ENCODE measurements at regions of chr7 and their contacts with region 1.

Region 1: DNA sequence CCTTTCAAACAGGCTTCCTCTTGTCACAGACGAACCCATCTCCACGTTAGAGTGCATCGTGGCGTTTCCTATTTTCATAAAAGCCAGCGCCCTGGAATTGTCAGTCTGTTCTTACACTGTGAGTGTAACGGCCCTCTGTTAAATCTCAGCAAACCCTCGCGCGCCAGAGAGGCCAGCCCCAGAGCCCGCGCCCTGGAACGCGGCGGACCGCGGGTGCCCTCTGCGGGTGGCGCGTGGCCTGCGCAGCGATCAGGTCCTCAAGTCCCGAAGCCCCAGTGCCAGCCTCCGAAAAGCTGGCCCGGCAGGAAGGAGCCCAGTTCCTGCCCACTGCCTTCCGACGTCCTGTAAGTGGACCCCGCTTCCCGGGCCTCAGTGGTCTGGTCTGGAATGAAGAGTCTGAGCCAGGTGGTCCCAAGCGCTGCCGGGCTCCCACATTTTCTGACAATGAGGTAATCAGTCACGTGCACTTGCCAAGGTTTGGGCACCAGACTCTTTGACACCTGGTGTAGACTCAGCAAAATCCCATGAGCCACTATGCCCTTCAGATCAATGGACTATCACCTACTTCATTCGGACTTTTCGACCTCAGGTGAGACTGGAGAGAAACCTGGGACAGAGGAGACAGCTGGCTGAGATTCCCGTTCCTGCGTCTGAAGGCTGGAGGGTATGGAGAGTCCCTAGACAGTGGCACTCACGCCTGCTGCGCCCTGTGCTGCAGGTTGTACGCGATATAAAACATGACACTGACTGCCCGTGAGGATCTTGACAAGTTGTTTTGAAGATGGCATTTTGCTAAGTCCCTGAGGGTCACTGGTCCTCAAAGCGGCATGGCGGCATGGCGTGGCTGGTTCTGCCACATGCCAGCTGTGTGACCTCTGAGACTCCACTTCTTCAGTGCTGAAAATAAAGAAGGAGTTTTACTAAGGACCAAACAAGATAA is 109.4 kb upstream of the LANCL2 start:
- DNase-seq: peak; percentile 93
- H3K4me3 ChIP-seq: peak overlapping the region; percentile 56 to 67
- H3K27ac ChIP-seq: peak overlapping the region; percentile 50 to 58; a peak in 3 of 4 replicates
- H3K4me1 ChIP-seq: peaks cover 0 to 15% of the 10 kb centered on the region in 2 experiments; a peak in 1 of 4 replicates
- H3K27me3 ChIP-seq: no peaks in the 10 kb centered on the region
- CTCF ChIP-seq: peak; percentile 99
- EP300 ChIP-seq: no peak
- RAD21 ChIP-seq: peak; percentile 99

Region 2: GRCh38 chr7:54856856-54857255 is 398.9 kb before region 1 on chr7:
- CTCF ChIA-PET with region 1: interaction called, 12 read pairs
- POLR2A ChIA-PET with region 1: no interaction called
- DNase-seq: no peak
- H3K4me3 ChIP-seq: no peak overlapping the region
- H3K27ac ChIP-seq: no peak overlapping the region
- H3K4me1 ChIP-seq: peaks cover 0 to 12% of the 10 kb centered on the region in 2 experiments; a peak in 1 of 4 replicates
- H3K27me3 ChIP-seq: no peaks in the 10 kb centered on the region
- CTCF ChIP-seq: no peak
- EP300 ChIP-seq: no peak
- RAD21 ChIP-seq: no peak

Region 3: GRCh38 chr7:54944179-54944578 is 311.6 kb before region 1 on chr7:
- CTCF ChIA-PET with region 1: interaction called, 10 read pairs
- POLR2A ChIA-PET with region 1: no interaction called
- DNase-seq: no peak
- H3K4me3 ChIP-seq: no peak overlapping the region
- H3K27ac ChIP-seq: peak overlapping the region in 1 of 2 experiments; percentile 13; a peak in 1 of 4 replicates
- H3K4me1 ChIP-seq: no peaks in the 10 kb centered on the region; a peak in 1 of 4 replicates
- H3K27me3 ChIP-seq: no peaks in the 10 kb centered on the region
- CTCF ChIP-seq: no peak
- EP300 ChIP-seq: no peak
- RAD21 ChIP-seq: no peak

Region 4: DNA sequence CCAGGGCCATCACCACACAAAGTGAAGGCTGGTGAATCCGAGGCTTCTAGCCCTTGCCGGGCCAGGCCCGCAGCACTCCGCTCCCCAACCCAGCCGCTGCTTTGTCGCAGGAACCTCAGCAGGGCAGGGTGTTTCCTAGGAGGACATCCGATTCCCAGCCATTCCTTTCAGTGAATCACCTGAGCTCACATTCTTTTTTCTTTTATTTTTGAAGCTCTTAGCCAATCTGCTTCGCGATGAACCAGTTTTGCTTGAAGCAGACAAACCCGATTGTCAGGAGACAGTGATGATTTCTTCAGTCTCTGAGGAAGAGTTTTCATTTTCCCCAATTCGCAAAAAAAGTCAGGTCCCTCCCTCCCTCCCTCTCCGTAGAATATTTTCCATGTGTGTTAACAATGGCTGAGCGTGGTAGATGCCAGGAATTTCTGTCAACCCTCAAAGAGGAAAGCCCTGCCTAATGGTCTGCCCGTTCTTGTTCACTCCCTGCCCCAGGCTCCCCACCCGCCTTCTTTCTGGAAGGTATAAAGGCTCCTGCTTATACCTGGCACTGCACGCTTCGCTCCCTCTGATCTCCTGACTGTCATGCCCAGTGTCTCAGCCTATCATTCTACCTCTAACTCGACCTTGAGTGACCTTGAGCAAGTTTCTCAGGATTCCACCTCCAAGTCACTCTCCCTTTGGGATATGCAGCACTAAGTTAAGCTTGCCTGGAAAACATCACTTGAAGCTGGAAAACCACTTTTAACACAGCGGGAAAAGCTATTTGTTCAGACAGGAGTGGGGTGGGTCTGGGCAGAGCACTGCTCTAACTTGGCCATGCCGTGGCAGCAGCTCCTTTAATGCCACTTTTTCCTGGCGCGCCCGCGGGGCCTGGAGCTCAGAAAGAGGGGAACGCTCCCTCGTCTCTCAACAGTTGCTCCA is 201.9 kb before region 1 on chr7:
- CTCF ChIA-PET with region 1: interaction called, 67 read pairs
- POLR2A ChIA-PET with region 1: interaction called, 3 read pairs
- DNase-seq: no peak
- H3K4me3 ChIP-seq: no peak overlapping the region
- H3K27ac ChIP-seq: peak overlapping the region in 1 of 2 experiments; percentile 78; a peak in 2 of 4 replicates
- H3K4me1 ChIP-seq: peaks cover 0 to 39% of the 10 kb centered on the region in 2 experiments; a peak in 2 of 4 replicates
- H3K27me3 ChIP-seq: no peaks in the 10 kb centered on the region
- CTCF ChIP-seq: no peak
- EP300 ChIP-seq: no peak
- RAD21 ChIP-seq: no peak

Region 5: GRCh38 chr7:55132890-55133551 is 122.7 kb before region 1 on chr7:
- CTCF ChIA-PET with region 1: interaction called, 38 read pairs
- POLR2A ChIA-PET with region 1: no interaction called
- DNase-seq: no peak
- H3K4me3 ChIP-seq: peak overlapping the region in 1 of 2 experiments; percentile 27; a peak in 2 of 4 replicates
- H3K27ac ChIP-seq: peak overlapping the region; percentile 92 to 100
- H3K4me1 ChIP-seq: peaks cover 46 to 61% of the 10 kb centered on the region in 2 experiments
- H3K27me3 ChIP-seq: no peaks in the 10 kb centered on the region
- CTCF ChIP-seq: no peak
- EP300 ChIP-seq: peak; percentile 29 to 99; a peak in 2 of 4 replicates
- RAD21 ChIP-seq: no peak; the same call in 1 of the 2 replicates

Region 6: DNA sequence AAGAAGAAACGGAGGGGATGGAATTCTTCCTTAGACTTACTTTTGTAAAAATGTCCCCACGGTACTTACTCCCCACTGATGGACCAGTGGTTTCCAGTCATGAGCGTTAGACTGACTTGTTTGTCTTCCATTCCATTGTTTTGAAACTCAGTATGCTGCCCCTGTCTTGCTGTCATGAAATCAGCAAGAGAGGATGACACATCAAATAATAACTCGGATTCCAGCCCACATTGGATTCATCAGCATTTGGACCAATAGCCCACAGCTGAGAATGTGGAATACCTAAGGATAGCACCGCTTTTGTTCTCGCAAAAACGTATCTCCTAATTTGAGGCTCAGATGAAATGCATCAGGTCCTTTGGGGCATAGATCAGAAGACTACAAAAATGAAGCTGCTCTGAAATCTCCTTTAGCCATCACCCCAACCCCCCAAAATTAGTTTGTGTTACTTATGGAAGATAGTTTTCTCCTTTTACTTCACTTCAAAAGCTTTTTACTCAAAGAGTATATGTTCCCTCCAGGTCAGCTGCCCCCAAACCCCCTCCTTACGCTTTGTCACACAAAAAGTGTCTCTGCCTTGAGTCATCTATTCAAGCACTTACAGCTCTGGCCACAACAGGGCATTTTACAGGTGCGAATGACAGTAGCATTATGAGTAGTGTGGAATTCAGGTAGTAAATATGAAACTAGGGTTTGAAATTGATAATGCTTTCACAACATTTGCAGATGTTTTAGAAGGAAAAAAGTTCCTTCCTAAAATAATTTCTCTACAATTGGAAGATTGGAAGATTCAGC is 49.3 kb before region 1 on chr7:
- CTCF ChIA-PET with region 1: interaction called, 132 read pairs
- POLR2A ChIA-PET with region 1: no interaction called
- DNase-seq: no peak
- H3K4me3 ChIP-seq: no peak overlapping the region
- H3K27ac ChIP-seq: no peak overlapping the region
- H3K4me1 ChIP-seq: peaks cover 2 to 8% of the 10 kb centered on the region in 2 experiments; a peak in 2 of 4 replicates
- H3K27me3 ChIP-seq: no peaks in the 10 kb centered on the region
- CTCF ChIP-seq: no peak
- EP300 ChIP-seq: no peak
- RAD21 ChIP-seq: no peak

Region 7: DNA sequence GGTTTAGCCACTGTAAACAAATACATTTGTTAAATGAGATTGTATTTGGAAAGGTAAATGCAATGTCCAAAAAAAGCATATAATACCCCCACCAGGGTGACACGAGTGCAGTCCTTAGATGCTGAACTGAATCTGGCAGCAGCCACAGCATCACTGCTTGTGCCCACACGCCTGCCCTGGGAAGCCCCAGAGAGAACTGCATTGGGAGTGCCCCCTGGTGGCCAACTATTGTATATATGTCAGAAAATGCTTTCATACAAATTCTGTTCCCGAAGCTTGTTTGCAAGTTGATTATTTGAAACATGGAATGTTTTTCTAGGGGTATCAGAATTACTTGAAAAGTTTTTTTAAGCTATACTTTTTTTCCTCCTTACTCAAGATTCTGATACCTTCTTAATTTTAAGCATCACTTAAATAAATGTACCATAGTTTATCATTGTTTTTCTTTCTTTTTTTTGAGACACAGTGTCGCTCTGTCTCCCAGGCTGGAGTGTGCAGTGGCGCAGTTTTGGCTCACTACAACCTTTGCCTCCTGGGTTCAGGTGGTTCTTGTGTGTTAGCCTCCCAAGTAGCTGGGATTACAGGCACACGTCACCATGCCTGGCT is 159.5 kb after region 1 on chr7:
- CTCF ChIA-PET with region 1: interaction called, 11 read pairs
- POLR2A ChIA-PET with region 1: no interaction called
- DNase-seq: peak; percentile 88
- H3K4me3 ChIP-seq: no peak overlapping the region
- H3K27ac ChIP-seq: no peak overlapping the region
- H3K4me1 ChIP-seq: peaks cover 0 to 5% of the 10 kb centered on the region in 2 experiments; a peak in 1 of 4 replicates
- H3K27me3 ChIP-seq: no peaks in the 10 kb centered on the region
- CTCF ChIP-seq: peak; percentile 96
- EP300 ChIP-seq: no peak
- RAD21 ChIP-seq: peak; percentile 84